ENCODE measurements at regions of chr19 and their contacts with region 1.

Region 1: GRCh38 chr19:44061038-44061437 is 9.2 kb downstream of the ZNF223 start:
- DNase-seq: no peak
- H3K4me3 ChIP-seq: no peak overlapping the region
- H3K27ac ChIP-seq: no peak overlapping the region
- H3K4me1 ChIP-seq: no peaks in the 10 kb centered on the region
- H3K27me3 ChIP-seq: no peaks in the 10 kb centered on the region
- CTCF ChIP-seq: no peak

Region 2: GRCh38 chr19:44010468-44010867 is 50.6 kb before region 1 on chr19:
- CTCF ChIA-PET with region 1: no interaction called
- dilution Hi-C with region 1: no loop called
- in situ Hi-C with region 1: no loop called
- intact Hi-C with region 1: no loop called
- DNase-seq: no peak
- H3K4me3 ChIP-seq: no peak overlapping the region
- H3K27ac ChIP-seq: no peak overlapping the region
- H3K4me1 ChIP-seq: no peaks in the 10 kb centered on the region
- H3K27me3 ChIP-seq: no peaks in the 10 kb centered on the region
- CTCF ChIP-seq: no peak

Region 3: DNA sequence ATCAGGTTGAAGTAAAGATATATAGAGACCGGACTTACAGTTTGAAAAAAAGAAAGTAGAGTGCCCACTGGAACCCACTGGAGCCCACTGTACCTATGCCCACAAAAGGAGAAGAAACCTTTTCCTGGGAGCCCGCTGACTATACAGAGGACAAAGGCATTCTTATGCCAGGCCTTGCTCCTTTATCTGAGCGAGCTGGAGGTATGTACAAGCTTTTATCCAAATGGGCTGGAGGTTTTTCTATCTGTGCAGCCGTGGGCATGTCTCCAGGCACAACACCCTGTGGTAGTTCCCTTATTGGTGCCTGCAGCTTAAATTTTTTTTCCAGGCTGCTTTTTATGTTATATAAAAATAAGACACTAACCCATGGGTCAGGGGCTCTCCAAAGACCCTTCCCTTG is 88.7 kb after region 1 on chr19:
- CTCF ChIA-PET with region 1: no interaction called
- dilution Hi-C with region 1: loop called (anchors 5 kb)
- in situ Hi-C with region 1: no loop called
- intact Hi-C with region 1: no loop called
- DNase-seq: no peak
- H3K4me3 ChIP-seq: no peak overlapping the region
- H3K27ac ChIP-seq: no peak overlapping the region
- H3K4me1 ChIP-seq: no peaks in the 10 kb centered on the region
- H3K27me3 ChIP-seq: no peaks in the 10 kb centered on the region
- CTCF ChIP-seq: no peak

Measured in mammary epithelial cell (primary cell).